Dendritic cell treated with granulocyte-macrophage colony-stimulating factor and Interleukin-4, amounts not matched to agents 40 ng/mL and 50 ng/mL, for 4 days (primary cell): ENCODE measurements at regions of chr3 and their contacts with region 1.

Region 1: GRCh38 chr3:101195951-101196713 is 124.2 kb downstream of the IMPG2 start:
- H3K4me3 Mint-ChIP-seq: no peak overlapping the region
- H3K27ac Mint-ChIP-seq: no peak overlapping the region
- H3K4me1 Mint-ChIP-seq: no peaks in the 10 kb centered on the region
- H3K27me3 Mint-ChIP-seq: no peaks in the 10 kb centered on the region

Region 2: DNA sequence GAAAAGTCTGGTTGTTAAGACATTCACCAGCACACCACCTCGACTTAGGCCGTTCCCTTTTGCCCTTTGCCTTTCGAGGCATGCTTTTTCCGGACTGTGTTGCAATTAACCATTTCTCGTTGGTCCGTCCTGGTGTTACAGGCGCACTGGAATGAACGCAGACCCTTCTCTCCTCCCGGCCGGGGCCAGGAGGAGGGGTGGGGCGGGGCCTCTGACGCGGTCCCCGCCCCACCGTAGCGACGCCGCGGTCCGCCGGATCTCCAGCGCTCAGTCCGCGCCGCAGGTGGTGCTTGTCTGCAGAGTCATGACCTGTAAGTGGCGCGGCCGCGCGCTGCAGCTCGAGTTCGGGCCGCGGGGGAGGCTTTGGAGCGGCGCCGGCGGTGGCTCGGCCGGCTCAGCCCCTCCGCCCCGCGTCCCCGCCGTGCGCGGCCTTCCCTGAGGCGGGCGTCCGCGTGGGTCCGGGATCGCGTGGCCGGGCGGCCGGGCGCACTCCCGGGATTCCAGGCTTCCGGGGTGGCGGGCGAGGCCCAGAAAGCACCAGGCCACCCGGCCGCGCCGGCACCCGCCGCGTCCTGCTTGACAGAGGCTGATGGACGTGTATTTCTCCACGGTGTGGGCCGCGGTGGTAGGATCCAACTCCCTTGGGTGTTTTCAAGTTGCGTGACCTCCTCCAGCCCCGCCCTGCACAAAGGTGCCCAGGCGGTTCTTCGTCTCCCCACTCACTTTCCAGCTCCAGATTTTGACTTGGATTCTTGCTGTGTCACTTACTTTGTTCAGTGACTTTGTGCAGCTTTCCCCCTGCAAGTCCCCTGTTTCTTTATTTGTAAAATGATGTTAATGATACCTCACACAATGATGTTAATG is 861.4 kb before region 1 on chr3 and contains the start of gene NIT2:
- intact Hi-C with region 1: no loop called
- H3K4me3 Mint-ChIP-seq: peak within 1 kb of the TSS; percentile 87
- H3K27ac Mint-ChIP-seq: peak within 1 kb of the TSS; percentile 88
- H3K4me1 Mint-ChIP-seq: peaks cover 25% of the 10 kb centered on the region
- H3K27me3 Mint-ChIP-seq: no peaks in the 10 kb centered on the region

Region 3: DNA sequence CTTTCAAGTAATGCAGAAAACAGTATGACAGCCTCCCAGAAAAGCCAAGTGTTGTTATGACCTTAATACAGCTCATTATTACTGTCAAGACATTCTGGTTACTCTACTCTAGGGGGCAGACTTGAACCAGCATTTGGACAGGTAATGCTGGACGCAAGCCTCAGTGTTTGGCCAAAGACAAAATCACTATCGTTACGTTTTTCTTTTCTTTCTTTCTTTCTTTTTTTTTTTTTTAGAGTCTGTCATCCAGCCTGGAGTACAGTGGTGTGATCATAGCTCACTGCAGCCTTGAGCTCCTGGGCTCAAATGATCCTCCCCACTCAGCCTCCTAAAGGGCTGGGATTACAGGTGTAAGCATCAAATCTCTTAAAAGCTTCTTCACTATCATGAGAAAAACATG is 733.1 kb before region 1 on chr3:
- intact Hi-C with region 1: loop called (anchors 10 kb)
- H3K4me3 Mint-ChIP-seq: no peak overlapping the region
- H3K27ac Mint-ChIP-seq: no peak overlapping the region
- H3K4me1 Mint-ChIP-seq: peaks cover 15% of the 10 kb centered on the region
- H3K27me3 Mint-ChIP-seq: no peaks in the 10 kb centered on the region

Region 4: DNA sequence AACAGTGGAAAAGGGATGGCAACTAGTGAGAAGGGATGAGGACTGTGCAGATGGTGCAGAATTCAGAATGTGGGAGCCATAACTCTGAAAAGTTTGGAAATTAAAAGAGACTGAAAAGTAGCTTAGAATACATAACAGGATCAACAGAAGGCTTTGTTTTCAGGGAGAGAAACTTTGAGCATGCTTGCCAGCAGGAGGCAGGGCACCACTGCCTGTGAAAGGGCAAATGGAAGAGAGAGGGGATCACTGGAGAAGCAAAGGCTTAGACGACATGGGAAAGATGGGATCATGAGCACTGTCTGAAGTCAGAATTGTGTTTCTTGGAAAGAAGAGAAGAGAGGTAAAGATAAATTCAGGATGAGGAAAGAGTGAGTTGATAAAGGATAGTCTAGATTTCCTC is 302.5 kb before region 1 on chr3:
- intact Hi-C with region 1: loop called (anchors 5 kb)
- H3K4me3 Mint-ChIP-seq: no peak overlapping the region
- H3K27ac Mint-ChIP-seq: peak overlapping the region; percentile 25
- H3K4me1 Mint-ChIP-seq: peaks cover 26% of the 10 kb centered on the region
- H3K27me3 Mint-ChIP-seq: no peaks in the 10 kb centered on the region

Region 5: DNA sequence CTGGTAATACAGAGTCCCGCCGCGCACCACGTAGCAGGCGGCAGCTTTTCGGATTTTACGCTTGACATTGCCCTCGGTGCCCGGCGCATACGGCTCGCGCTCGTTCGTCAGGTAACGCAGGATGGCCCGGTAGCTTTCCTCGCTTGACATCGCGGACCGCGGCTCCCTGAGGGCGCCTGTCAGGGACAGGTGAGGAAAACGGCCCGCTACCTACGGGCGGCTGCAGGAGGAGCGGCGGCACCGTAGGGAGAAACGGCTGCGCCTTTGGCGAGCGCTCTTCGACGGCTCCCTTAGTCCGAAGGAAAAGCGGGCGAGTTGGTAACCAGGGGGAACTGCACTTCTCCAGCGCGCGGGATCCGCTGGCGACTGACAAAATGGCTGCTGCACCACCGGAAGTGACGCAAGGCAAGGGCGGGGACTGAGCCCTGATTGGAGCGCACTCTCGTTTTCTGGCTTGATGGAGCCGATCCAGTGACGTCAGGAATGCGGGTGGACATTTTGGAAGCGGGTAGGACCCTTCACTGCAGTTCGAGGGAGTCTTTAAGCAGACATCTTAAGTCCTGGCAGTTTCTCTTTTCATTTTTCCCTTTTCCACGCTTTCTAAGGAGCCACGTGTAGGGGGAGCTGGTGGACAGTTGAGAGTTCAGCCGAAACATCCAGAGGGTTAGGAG is 480.8 kb after region 1 on chr3 and contains the start of gene ZBTB11:
- intact Hi-C with region 1: no loop called
- H3K4me3 Mint-ChIP-seq: peak within 1 kb of the TSS; percentile 89
- H3K27ac Mint-ChIP-seq: peak within 1 kb of the TSS; percentile 98
- H3K4me1 Mint-ChIP-seq: peaks cover 46% of the 10 kb centered on the region
- H3K27me3 Mint-ChIP-seq: no peaks in the 10 kb centered on the region